ENCODE measurements at regions of chr3 and their contacts with region 1.

Region 1: DNA sequence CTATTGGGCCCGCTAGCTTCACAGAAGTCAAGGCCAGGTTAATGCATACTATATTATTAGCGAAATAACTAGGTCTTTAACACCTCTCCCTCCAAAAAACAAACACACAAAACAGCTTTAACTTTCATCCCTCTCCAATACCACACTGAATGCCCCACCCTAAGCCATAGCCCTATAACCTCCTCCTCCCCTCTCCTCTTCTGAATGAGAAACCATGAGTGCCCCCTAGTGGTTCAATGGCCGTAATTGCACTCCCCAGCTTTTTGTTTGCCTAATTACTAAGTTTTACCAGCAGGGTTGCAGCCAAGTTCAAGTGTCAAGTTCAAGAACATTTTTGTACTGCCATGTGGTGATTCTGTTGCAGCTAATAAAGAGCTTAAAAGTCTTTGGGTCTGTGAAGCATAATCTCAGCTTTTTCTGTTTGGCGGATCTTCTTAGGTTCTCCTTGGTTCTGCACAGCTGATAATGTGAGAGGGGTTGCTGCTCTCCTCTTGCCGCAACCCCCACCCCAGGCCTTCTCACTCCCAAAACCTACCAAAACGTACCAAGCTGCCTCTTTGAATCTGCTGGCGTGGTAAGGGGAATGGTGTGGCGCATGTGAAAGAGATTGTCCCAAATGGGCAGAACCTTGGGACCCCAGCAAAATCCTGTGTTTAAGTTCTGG is 57.9 kb downstream of the RPL22L1 start:
- DNase-seq: peak; percentile 78 to 84
- H3K4me3 ChIP-seq: no peak overlapping the region
- H3K27ac ChIP-seq: no peak overlapping the region
- H3K4me1 ChIP-seq: peaks cover 55% of the 10 kb centered on the region
- H3K27me3 ChIP-seq: no peaks in the 10 kb centered on the region
- CTCF ChIP-seq: peak; percentile 100

Region 2: GRCh38 chr3:169764452-169765274 is 1047.4 kb before region 1 on chr3 and contains the start of gene TERC:
- CTCF ChIA-PET with region 1: interaction called, 10 read pairs
- POLR2A ChIA-PET with region 1: no interaction called
- intact Hi-C with region 1: loop called (anchors 2 kb)
- DNase-seq: peak; percentile 93 to 96
- H3K4me3 ChIP-seq: peak within 1 kb of the TSS; percentile 99
- H3K27ac ChIP-seq: peak within 1 kb of the TSS; percentile 75
- H3K4me1 ChIP-seq: peaks cover 5% of the 10 kb centered on the region; the same call in 1 of the 2 replicates
- H3K27me3 ChIP-seq: no peaks in the 10 kb centered on the region
- CTCF ChIP-seq: no peak
- total RNA-seq, gene TERC: 7.6 and 22.7 TPM in 2 replicates

Region 3: DNA sequence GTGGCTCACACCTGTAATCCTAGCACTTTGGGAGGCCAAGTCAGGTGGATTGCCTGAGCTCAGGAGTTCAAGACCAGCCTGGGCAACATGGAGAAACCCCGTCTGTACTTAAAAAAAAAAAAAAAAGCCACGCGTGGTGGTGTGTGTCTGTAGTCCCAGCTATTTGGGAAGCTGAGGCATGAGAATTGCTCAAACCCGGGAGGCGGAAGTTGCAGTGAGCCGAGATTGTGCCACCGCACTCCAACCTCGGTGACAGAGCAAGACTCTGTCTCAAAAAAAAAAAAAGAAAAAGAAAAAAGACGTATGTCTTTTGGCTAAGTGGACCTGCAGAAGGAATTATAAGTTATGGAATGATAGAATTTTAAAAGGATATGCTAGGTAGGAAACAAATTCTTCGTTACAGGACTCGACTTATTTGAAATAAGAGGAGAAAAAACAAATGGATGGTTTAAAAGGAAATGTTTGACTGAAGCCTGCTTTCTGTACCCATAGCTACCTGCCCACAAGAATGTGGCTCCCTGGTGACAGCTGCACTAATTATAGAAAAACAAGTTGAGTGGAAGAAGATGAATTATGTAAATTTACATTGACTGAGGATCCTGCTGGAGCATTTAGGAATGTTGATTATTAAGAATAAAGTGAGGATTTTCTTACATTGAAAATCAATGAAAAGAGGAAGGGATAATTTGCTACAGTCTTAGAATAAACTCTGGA is 490.6 kb before region 1 on chr3:
- CTCF ChIA-PET with region 1: no interaction called
- POLR2A ChIA-PET with region 1: interaction called, 17 read pairs
- intact Hi-C with region 1: no loop called
- DNase-seq: peak; percentile 63 to 84
- H3K4me3 ChIP-seq: no peak overlapping the region
- H3K27ac ChIP-seq: peak overlapping the region; percentile 52
- H3K4me1 ChIP-seq: peaks cover 35% of the 10 kb centered on the region
- H3K27me3 ChIP-seq: no peaks in the 10 kb centered on the region
- CTCF ChIP-seq: no peak

Region 4: DNA sequence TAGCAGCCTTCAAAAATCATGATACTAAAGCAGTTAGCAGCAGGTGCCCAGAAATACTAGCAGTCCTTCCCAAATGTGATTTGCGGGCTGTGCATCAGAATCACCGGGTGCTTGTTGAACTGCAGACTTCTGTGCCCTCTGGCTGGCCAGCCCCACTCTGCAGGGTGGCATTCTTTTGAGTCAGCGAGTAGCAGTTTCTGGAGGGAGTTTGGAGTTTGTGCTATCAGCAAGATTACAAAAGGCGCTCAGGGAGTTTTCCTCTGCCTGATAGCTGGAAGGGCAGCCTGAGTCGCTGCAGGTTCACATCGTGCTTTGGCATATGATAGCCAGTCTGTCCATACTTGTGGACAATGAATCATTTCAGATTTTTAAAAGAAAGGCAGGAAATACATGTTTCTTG is 335.8 kb before region 1 on chr3:
- CTCF ChIA-PET with region 1: no interaction called
- POLR2A ChIA-PET with region 1: no interaction called
- intact Hi-C with region 1: no loop called
- DNase-seq: peak; percentile 11 to 47
- H3K4me3 ChIP-seq: no peak overlapping the region
- H3K27ac ChIP-seq: no peak overlapping the region
- H3K4me1 ChIP-seq: peaks cover 11% of the 10 kb centered on the region; the same call in 1 of the 2 replicates
- H3K27me3 ChIP-seq: no peaks in the 10 kb centered on the region
- CTCF ChIP-seq: no peak

Region 5: DNA sequence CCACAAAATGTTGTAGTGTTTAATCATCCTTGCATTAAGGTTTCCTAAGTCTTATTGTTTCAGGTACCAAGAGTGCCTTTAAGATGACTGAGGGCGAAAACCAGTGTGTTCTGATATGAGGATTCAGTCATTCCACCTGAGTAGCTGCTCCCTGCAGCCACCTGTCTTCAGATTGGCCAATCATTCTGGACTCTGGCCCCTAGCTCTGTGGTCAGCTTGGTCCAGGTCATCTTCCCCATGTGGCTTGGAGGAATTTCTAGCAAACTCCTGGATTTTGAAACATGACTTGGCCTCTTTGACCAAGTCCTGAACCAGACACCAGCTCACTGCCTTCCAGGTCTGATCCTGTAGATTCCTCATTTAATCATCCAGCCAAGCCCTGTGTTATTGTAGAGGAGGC is 218.4 kb before region 1 on chr3:
- CTCF ChIA-PET with region 1: no interaction called
- POLR2A ChIA-PET with region 1: no interaction called
- intact Hi-C with region 1: loop called (anchors 5 kb)
- DNase-seq: no peak
- H3K4me3 ChIP-seq: no peak overlapping the region
- H3K27ac ChIP-seq: no peak overlapping the region
- H3K4me1 ChIP-seq: 0 out of 2 replicates have a peak, but pooled peaks cover 8% of the 10 kb centered on the region
- H3K27me3 ChIP-seq: no peaks in the 10 kb centered on the region
- CTCF ChIP-seq: no peak

Region 6: GRCh38 chr3:170717410-170718402 is 94.4 kb before region 1 on chr3:
- CTCF ChIA-PET with region 1: interaction called, 5 read pairs
- POLR2A ChIA-PET with region 1: no interaction called
- intact Hi-C with region 1: loop called (anchors 1 kb)
- DNase-seq: peak; percentile 60 to 63
- H3K4me3 ChIP-seq: no peak overlapping the region
- H3K27ac ChIP-seq: no peak overlapping the region
- H3K4me1 ChIP-seq: peaks cover 26% of the 10 kb centered on the region
- H3K27me3 ChIP-seq: no peaks in the 10 kb centered on the region
- CTCF ChIP-seq: no peak

Region 7: GRCh38 chr3:170751083-170751898 is 60.8 kb before region 1 on chr3:
- CTCF ChIA-PET with region 1: interaction called, 3 read pairs
- POLR2A ChIA-PET with region 1: interaction called, 4 read pairs
- intact Hi-C with region 1: loop called (anchors 2 kb)
- DNase-seq: peak; percentile 85 to 94
- H3K4me3 ChIP-seq: no peak overlapping the region
- H3K27ac ChIP-seq: peak overlapping the region; percentile 83
- H3K4me1 ChIP-seq: peaks cover 44% of the 10 kb centered on the region
- H3K27me3 ChIP-seq: no peaks in the 10 kb centered on the region
- CTCF ChIP-seq: no peak